Endothelial cell of umbilical vein (primary cell): ENCODE measurements at regions of chr1 and their contacts with region 1.

Region 1: DNA sequence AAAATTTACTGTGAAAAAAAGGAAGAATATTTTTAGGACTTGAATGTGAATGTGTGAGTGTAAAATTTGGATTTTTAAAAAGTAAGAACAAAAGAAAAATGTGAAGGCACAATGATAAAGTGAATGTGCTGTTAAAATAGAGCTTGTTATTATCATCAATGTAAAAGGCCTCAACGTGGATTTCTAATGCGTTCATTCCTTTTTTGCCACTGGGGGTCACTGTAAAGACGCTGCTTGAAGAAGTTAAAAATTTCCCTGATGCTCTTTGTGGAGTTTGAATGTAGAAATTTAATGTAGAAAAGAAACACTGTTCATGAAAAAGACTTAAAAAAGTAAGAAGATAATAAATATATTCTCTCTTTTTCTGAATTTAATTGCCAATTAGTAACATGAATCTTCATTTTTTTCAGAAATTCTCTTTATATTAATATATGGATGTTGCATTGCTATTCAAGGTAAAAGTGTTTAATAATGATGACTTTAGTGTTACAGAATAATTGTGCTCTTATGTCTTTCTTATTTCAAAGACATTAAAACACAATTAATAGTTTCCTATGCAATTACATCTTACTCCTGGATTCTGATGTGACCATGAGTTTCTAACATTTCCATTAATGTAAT is 161.5 kb downstream of the DNM3 start:
- DNase-seq: peak; percentile 74
- H3K4me3 ChIP-seq: no peak overlapping the region
- H3K27ac ChIP-seq: no peak overlapping the region
- H3K4me1 ChIP-seq: peaks cover 8% of the 10 kb centered on the region
- H3K27me3 ChIP-seq: no peaks in the 10 kb centered on the region
- CTCF ChIP-seq: peak; percentile 46 to 58
- POLR2A ChIP-seq: no peak

Region 2: GRCh38 chr1:171389171-171389570 is 613.7 kb before region 1 on chr1:
- CTCF ChIA-PET with region 1: no interaction called
- POLR2A ChIA-PET with region 1: no interaction called
- dilution Hi-C with region 1: no loop called
- intact Hi-C with region 1: no loop called
- DNase-seq: no peak
- H3K4me3 ChIP-seq: no peak overlapping the region
- H3K27ac ChIP-seq: no peak overlapping the region
- H3K4me1 ChIP-seq: no peaks in the 10 kb centered on the region
- H3K27me3 ChIP-seq: no peaks in the 10 kb centered on the region
- CTCF ChIP-seq: no peak
- POLR2A ChIP-seq: no peak

Region 3: GRCh38 chr1:171801487-171801891 is 201.3 kb before region 1 on chr1:
- CTCF ChIA-PET with region 1: interaction called, 11 read pairs
- POLR2A ChIA-PET with region 1: no interaction called
- dilution Hi-C with region 1: loop called (anchors 25 kb)
- intact Hi-C with region 1: no loop called
- DNase-seq: peak; percentile 51
- H3K4me3 ChIP-seq: no peak overlapping the region
- H3K27ac ChIP-seq: no peak overlapping the region
- H3K4me1 ChIP-seq: no peaks in the 10 kb centered on the region
- H3K27me3 ChIP-seq: no peaks in the 10 kb centered on the region
- CTCF ChIP-seq: peak; percentile 69 to 75
- POLR2A ChIP-seq: no peak

Region 4: DNA sequence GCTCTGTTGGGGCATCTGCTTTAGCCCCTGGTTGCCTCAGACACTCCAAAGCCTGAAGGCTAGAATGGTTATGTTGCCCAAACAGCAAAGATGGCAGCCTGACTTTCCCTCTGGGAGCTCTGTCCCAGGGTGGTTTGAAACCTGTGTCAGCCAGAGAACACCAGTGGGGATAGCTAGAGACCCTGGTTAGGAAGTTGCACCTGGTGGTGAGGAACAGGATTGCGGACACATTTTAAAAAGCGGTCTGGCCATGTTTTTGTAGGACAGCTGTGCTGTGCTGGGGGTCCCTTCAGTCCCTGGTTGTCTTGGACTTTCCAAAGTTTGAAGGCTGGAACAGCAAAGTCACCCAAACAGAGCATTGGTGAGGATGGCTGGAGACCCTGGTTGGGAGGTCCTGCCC is 73.7 kb before region 1 on chr1:
- CTCF ChIA-PET with region 1: no interaction called
- POLR2A ChIA-PET with region 1: no interaction called
- dilution Hi-C with region 1: no loop called
- intact Hi-C with region 1: no loop called
- DNase-seq: no peak
- H3K4me3 ChIP-seq: no peak overlapping the region
- H3K27ac ChIP-seq: no peak overlapping the region
- H3K4me1 ChIP-seq: no peaks in the 10 kb centered on the region
- H3K27me3 ChIP-seq: no peaks in the 10 kb centered on the region
- CTCF ChIP-seq: peak in 1 of 2 donors; percentile 18
- POLR2A ChIP-seq: no peak

Region 5: DNA sequence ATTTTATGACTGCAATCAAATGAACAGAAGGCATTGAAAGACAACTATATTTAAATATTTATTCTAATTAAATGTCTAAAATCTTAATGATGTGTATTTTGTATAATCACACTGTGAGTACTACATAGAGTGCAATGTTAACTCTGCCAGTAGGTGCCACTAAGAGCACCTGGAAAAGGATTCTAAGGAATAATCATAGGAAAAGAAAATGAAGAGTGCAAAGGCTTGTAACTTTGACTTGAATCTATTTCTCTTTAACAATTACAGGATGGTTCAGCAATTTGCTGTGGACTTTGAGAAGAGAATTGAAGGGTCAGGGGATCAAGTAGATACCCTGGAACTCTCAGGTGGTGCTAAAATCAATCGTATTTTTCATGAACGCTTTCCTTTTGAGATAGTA is 38.9 kb after region 1 on chr1:
- CTCF ChIA-PET with region 1: interaction called, 18 read pairs
- POLR2A ChIA-PET with region 1: no interaction called
- dilution Hi-C with region 1: no loop called
- intact Hi-C with region 1: loop called (anchors 2 kb)
- DNase-seq: peak; percentile 45
- H3K4me3 ChIP-seq: no peak overlapping the region
- H3K27ac ChIP-seq: no peak overlapping the region
- H3K4me1 ChIP-seq: peaks cover 14% of the 10 kb centered on the region
- H3K27me3 ChIP-seq: no peaks in the 10 kb centered on the region
- CTCF ChIP-seq: peak; percentile 7 to 12
- POLR2A ChIP-seq: no peak

Region 6: DNA sequence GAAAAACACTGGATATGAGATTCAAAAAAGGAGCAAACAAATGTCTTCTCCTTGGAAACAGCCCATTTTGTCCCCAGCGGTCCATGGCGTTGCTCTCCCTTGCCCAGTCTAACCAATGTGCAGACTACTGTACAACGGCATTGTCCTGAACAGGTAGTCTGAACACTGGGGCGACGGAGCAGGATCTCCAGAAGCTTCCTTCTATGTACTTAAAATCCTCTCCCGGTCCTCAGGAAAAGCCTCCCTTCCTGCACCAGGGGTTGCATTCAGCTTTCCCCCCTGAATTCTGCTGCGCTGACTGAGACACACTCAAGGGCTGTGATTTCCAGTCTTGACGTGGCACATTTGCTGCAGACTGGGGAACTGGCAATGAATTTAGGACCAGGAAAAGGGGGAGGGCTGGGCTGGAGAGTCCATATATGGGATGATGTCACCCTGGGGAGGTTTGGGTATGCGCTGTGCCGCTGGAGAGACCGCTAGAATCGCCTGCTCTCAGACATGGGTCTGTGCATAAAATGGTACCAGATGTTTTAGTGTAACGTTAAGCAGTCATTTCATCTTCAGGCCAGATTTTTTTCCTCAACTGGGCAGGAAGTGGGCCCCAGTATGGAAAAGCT is 141.7 kb after region 1 on chr1:
- CTCF ChIA-PET with region 1: interaction called, 14 read pairs
- POLR2A ChIA-PET with region 1: no interaction called
- dilution Hi-C with region 1: no loop called
- intact Hi-C with region 1: loop called (anchors 2 kb)
- DNase-seq: peak; percentile 76
- H3K4me3 ChIP-seq: peak overlapping the region; percentile 22 to 96 (median 38)
- H3K27ac ChIP-seq: peak overlapping the region; percentile 87
- H3K4me1 ChIP-seq: peaks cover 57% of the 10 kb centered on the region
- H3K27me3 ChIP-seq: no peaks in the 10 kb centered on the region
- CTCF ChIP-seq: no peak
- POLR2A ChIP-seq: no peak

Region 7: DNA sequence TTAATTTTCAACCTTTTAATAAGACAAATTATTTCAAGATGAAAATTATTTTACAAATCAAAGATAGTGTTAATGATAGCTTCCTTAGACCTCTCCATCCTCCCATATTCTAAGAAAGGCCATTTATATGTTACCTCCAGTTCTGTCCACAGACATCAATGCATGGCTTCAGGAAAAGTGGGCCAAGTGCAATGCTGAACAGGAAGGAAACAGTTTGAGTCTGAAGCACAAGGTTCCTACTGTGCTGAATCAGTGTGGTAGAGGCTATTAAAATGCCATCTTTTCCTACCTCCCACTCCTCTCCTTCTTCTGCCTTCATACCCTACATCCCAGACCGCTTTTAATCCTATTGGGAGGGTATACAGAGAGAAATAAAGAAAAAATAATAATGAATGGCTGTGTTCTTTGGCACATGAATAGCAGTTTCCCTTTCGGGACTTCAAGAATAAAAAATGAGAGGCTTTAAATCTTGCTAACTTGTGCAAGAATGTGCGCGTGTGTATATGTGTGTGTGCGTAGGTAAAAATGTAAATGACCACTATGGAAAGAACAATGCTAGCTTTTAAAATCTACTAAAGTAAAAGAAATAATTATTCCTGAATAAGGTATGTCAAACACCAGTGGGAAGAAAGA is 355.0 kb after region 1 on chr1:
- CTCF ChIA-PET with region 1: interaction called, 24 read pairs
- POLR2A ChIA-PET with region 1: no interaction called
- dilution Hi-C with region 1: no loop called
- intact Hi-C with region 1: no loop called
- DNase-seq: peak; percentile 76
- H3K4me3 ChIP-seq: peak overlapping the region in 1 of 3 experiments; percentile 36
- H3K27ac ChIP-seq: peak overlapping the region; percentile 95
- H3K4me1 ChIP-seq: peaks cover 48% of the 10 kb centered on the region
- H3K27me3 ChIP-seq: no peaks in the 10 kb centered on the region
- CTCF ChIP-seq: no peak
- POLR2A ChIP-seq: no peak

Region 8: DNA sequence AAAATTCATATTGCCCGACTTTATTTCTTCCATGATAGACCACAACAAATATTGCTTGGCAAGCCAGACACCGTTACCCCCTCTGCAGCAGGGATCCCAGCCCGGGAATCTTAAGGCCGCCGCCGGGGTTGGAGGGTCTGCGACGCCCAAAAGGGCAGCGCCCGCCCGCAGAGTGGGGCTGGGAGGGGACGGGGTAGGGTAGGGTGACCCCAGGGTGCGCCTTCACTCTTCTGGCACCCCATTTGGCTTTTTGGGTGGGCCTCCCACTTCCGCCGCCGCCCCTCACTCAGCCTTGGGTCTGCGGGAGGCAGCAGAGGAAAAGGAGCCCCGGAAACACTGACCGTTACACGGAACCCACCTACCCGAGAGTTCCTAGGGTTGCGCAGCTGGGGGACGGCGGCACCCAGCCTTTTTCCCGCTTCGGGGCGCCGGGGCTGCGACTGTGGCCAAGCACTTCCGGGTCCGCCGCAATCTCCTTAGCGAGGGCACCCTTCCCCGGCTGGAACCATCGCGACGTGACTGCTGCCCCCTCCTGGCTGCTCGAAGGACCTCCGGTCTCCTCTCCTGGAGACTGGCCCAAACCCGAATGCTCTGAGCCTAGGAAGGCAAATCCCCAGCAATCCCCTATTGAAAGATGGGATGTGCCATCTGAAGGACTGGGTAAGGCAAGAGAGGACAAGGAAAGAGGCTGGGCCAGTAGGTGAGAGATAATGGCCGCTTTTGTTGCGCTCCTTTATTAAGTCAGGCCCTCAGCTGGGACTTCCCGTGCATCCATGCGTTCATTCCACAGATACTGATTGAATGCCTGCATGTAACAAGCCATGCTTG is 441.0 kb after region 1 on chr1 and contains the start of gene PIGC:
- CTCF ChIA-PET with region 1: interaction called, 42 read pairs
- POLR2A ChIA-PET with region 1: no interaction called
- dilution Hi-C with region 1: no loop called
- intact Hi-C with region 1: loop called (anchors 1 kb)
- DNase-seq: peak; percentile 83
- H3K4me3 ChIP-seq: peak within 1 kb of the TSS; percentile 68 to 92 (median 83)
- H3K27ac ChIP-seq: peak within 1 kb of the TSS; percentile 76
- H3K4me1 ChIP-seq: peaks cover 16% of the 10 kb centered on the region
- H3K27me3 ChIP-seq: no peaks in the 10 kb centered on the region
- CTCF ChIP-seq: peak; percentile 90 to 93
- POLR2A ChIP-seq: peak; percentile 63
- total RNA-seq, gene PIGC: 15.9 and 16.1 TPM in 2 replicates